Calu3 (cell line): ENCODE measurements at regions of chr5 and their contacts with region 1.

Region 1: DNA sequence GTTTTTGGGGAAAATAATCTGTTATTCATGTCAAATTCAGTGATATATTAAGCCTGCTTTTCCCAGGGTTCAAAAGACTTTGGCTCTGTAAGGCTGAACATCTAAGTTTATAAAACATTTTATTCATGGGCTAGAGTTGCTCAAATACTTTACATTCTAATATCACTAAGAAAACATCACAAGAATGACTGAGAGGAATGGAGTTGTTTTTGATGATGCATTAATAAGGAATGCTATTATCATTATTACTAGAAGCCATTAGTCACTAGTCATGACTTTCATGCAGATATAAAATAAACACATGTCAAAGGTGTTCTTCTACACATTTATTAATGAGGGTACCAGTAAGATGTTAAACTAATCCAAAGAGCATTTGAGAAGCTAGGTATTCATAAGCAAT is 185.5 kb upstream of the KCNN2 start:
- DNase-seq: no peak
- H3K4me3 Mint-ChIP-seq: no peak overlapping the region
- H3K27ac Mint-ChIP-seq: no peak overlapping the region
- H3K4me1 Mint-ChIP-seq: peaks cover 8% of the 10 kb centered on the region
- H3K27me3 Mint-ChIP-seq: no peaks in the 10 kb centered on the region
- CTCF ChIP-seq: no peak

Region 2: DNA sequence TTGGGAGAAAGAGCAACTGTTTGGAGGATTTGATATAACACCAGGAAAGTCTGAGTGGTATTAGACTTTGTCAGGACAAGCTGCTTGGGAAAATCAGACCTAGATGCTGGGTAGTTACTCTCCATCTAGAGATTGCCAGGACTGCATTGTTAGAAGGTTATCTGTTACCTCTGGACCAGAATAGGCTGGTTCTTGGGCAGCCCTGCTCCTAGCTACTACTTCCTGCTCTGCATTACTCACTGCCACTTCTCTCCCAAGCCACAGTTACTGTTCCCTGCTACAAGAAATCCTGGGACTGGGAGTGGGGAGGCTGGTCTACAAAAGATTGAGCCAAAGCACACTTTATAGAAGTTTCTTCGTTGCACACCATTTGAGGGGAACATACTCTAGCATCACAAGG is 90.0 kb after region 1 on chr5:
- CTCF ChIA-PET with region 1: no interaction called
- intact Hi-C with region 1: no loop called
- DNase-seq: no peak
- H3K4me3 Mint-ChIP-seq: no peak overlapping the region
- H3K27ac Mint-ChIP-seq: no peak overlapping the region
- H3K4me1 Mint-ChIP-seq: no peaks in the 10 kb centered on the region
- H3K27me3 Mint-ChIP-seq: no peaks in the 10 kb centered on the region
- CTCF ChIP-seq: no peak

Region 3: GRCh38 chr5:114437936-114438335 is 261.6 kb after region 1 on chr5:
- CTCF ChIA-PET with region 1: no interaction called
- intact Hi-C with region 1: loop called (anchors 1 kb)
- DNase-seq: no peak
- H3K4me3 Mint-ChIP-seq: no peak overlapping the region
- H3K27ac Mint-ChIP-seq: no peak overlapping the region
- H3K4me1 Mint-ChIP-seq: peaks cover 8% of the 10 kb centered on the region
- H3K27me3 Mint-ChIP-seq: peaks cover 11% of the 10 kb centered on the region
- CTCF ChIP-seq: no peak